OCI-LY7 (cell line): ENCODE measurements at regions of chr20 and their contacts with region 1.

Region 1: DNA sequence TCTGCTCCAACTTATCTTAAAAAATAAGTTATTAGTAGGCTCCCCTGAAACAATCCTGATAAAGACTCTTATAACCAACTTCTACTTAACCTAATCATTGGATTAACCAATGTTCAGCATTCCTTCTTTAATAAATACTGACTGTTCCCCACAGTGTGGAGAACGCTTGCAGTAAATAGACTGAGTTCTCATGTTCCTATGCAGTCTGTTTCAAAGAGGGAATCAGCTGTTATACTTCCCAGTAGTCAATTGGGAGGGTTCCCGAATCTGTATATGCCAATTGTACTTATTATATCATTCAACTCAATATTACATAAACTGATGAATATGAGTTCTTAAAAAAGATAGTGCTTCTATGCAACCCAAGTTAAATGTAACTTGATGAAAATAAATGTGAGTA is 9.7 kb upstream of the JAG1 start:
- DNase-seq: no peak
- H3K4me3 ChIP-seq: no peak overlapping the region
- H3K27ac ChIP-seq: no peak overlapping the region
- H3K4me1 ChIP-seq: no peaks in the 10 kb centered on the region
- CTCF ChIP-seq: no peak

Region 2: GRCh38 chr20:10659651-10660601 is 23.6 kb before region 1 on chr20:
- CTCF ChIA-PET with region 1: no interaction called
- POLR2A ChIA-PET with region 1: interaction called, 11 read pairs
- intact Hi-C with region 1: no loop called
- DNase-seq: no peak
- H3K4me3 ChIP-seq: no peak overlapping the region
- H3K27ac ChIP-seq: no peak overlapping the region
- H3K4me1 ChIP-seq: no peaks in the 10 kb centered on the region
- CTCF ChIP-seq: no peak